ENCODE measurements at regions of chr2 and their contacts with region 1.

Region 1: DNA sequence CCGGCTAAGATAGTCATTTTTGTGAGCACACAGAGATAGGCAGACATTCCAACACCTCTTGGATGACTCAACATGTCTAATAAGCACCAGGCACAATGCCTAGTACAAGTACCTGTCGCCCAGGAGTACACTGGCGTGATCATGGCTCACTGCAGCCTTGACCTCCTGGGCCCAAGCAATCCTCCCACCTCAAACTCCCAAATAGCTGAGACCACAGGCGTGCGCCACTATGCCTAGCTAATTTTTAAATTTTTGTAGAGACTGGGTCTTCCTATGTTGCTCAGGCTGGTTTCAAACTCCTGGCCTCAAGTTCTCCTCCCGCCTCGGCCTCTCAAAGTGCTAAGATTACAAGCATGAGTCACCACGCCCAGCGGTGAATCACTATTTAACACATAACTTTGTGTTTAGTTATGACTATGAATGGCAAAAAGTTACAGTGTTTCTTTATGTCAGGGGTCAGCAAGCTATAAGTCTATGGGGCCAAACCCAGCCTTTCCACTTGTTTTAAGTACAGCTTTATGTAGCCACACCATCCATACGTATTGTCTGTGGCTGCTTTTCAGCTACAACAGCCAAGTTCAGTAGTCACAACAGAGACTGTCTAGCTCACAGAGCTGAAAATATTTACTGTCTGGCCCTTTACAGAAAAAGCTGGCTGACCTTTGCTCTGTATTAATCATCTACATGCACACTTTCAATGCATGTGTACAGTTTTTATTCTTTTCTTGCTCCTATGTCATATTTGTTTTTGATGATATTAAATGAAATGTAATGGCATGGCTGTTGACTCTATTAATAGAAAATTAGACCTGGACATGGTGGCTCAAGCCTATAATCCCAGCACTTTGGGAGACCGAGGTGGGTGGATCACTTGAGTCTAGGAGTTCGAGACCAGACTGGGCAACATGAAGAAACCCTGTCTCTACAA is 18.7 kb downstream of the ORC2 start:
- DNase-seq: no peak
- ATAC-seq: peak; percentile 55
- H3K4me3 ChIP-seq: no peak overlapping the region
- H3K27ac ChIP-seq: no peak overlapping the region
- H3K4me1 ChIP-seq: no peaks in the 10 kb centered on the region
- H3K27me3 ChIP-seq: no peaks in the 10 kb centered on the region
- CTCF ChIP-seq: no peak
- EP300 ChIP-seq: no peak
- POLR2A ChIP-seq: no peak
- RAD21 ChIP-seq: no peak

Region 2: GRCh38 chr2:200929334-200930249 is 15.1 kb before region 1 on chr2:
- CTCF ChIA-PET with region 1: interaction called, 5 read pairs
- POLR2A ChIA-PET with region 1: interaction called, 11 read pairs
- RAD21 ChIA-PET with region 1: no interaction called
- SMC1A ChIA-PET with region 1: no interaction called
- in situ Hi-C with region 1: no loop called
- intact Hi-C with region 1: no loop called
- DNase-seq: no peak
- ATAC-seq: no peak
- H3K4me3 ChIP-seq: no peak overlapping the region
- H3K27ac ChIP-seq: no peak overlapping the region
- H3K4me1 ChIP-seq: no peaks in the 10 kb centered on the region
- H3K27me3 ChIP-seq: no peaks in the 10 kb centered on the region
- CTCF ChIP-seq: no peak
- EP300 ChIP-seq: no peak
- POLR2A ChIP-seq: no peak
- RAD21 ChIP-seq: no peak